ENCODE measurements at regions of chr1 and their contacts with region 1.

Region 1: DNA sequence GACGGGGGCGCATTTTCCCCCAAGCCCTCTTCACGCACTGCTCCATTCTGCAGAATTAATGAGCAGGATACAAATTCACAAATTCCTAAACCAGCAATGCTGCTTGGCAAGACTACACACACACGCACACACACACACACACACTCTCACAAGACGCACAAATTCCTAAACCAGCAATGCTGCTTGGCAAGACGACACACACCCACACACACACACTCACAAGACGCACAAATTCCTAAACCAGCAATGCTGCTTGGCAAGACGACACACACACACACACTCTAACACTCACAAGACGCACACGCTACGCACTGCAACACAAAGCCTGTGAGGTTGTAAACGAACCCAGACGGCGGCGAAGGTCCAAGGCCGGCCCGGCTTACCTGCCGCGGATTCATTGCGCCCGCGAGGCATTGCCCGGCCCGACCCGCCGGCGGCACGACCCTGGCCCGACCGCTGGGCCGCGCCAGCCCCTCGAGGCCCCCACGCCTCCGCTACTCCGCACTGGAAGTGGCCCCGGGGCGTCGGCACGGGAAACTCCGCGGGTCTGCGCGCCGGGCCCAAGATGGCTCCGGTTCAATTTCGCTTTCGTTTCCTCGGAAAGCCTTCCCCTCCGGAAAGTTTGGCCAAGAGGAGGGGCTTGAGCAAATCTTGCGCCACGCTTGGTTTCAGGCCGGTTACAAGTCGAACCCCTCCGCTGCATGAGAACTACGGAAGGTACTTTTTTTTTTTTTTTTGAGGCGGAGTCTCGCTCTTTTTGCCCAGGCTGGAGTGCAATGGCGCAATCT is at the start of gene ADAR:
- DNase-seq: peak; percentile 85 to 91
- ATAC-seq: peak; percentile 95 to 97
- H3K4me3 ChIP-seq: peak within 1 kb of the TSS; percentile 63 to 98 (median 80)
- H3K27ac ChIP-seq: peak within 1 kb of the TSS; percentile 79 to 97 (median 87)
- H3K4me1 ChIP-seq: peaks cover 21 to 46% of the 10 kb centered on the region in 2 donors
- H3K27me3 ChIP-seq: no peaks in the 10 kb centered on the region
- CTCF ChIP-seq: no peak
- POLR2A ChIP-seq: peak; percentile 48 to 51
- total RNA-seq, gene ADAR: 16.4 to 38.4 (median 19.0) TPM

Region 2: GRCh38 chr1:154627257-154628120 is 19.7 kb after region 1 on chr1:
- in situ Hi-C with region 1: no loop called
- intact Hi-C with region 1: loop called (anchors 1 kb)
- DNase-seq: peak; percentile 71 to 80
- ATAC-seq: peak; percentile 79 to 83
- H3K4me3 ChIP-seq: peak overlapping the region; percentile 91 to 100 (median 95)
- H3K27ac ChIP-seq: peak overlapping the region; percentile 82 to 89 (median 84)
- H3K4me1 ChIP-seq: peaks cover 13 to 19% of the 10 kb centered on the region in 2 donors
- H3K27me3 ChIP-seq: no peaks in the 10 kb centered on the region
- CTCF ChIP-seq: no peak
- POLR2A ChIP-seq: no peak

Region 3: DNA sequence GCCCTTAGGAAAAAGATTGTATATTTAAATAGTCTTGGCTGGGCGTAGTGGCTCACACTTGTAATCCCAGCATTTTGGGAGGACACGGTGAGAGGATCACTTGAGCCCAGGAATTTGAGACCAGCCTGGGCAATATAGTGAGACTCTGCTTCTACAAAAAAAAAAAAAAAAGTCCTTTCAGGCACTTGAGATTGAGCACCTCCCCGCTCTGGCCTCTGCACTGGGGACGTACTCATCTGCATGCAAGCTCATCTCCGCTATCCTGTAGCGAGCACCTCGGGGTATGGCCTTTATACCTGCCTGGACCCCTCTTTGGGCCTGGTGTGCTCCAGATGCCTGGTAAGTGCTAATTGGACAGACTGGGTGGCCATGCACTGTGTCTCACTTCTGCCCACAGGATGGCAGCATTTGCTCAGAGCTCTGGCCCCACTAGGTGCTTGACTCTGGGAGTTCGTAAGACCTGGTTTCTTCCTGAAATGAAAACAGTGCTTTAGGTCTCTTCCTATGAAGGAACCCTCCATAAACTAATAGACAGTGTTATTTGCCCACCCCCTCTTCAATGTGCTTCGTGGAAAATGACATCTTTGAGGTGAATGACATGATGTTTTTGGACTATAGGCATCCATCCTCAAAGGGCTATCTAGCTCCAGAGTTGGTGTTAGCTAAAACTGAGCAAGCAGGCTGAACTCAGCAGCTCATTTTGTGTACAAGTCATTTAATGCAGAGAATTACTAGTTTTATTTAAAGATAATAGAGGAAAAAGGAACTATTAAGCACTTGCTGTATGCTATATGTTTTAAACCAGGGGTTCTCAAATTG is 61.9 kb after region 1 on chr1:
- in situ Hi-C with region 1: no loop called
- intact Hi-C with region 1: no loop called
- DNase-seq: peak; percentile 60 to 71
- ATAC-seq: peak; percentile 96 to 100
- H3K4me3 ChIP-seq: no peak overlapping the region
- H3K27ac ChIP-seq: no peak overlapping the region
- H3K4me1 ChIP-seq: no peaks in the 10 kb centered on the region
- H3K27me3 ChIP-seq: no peaks in the 10 kb centered on the region
- CTCF ChIP-seq: peak; percentile 80 to 91 (median 87)
- POLR2A ChIP-seq: no peak